Caco-2 (cell line): ENCODE measurements at regions of chr19 and their contacts with region 1.

Region 1: DNA sequence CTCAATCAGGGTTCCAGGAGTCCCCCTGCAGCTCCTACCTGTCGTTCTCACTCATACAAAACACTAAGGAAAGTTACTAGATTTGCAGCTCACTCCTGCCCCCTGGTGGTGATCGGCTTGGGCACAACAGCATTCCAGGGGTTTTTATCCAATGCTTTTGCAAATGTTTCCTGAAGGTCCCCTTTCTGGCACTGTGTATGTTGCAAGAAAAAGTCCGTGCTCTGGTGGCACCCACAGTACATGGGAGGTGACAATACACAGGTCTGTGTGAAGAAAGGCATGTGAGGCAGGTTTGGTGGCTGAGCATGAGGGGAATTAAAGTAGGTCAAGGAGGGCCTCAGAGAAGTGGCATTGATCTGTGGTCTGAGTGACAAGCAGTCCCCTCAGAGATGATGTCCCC is 8.6 kb upstream of the TYK2 start:
- DNase-seq: peak; percentile 82 to 87
- H3K4me3 ChIP-seq: no peak overlapping the region
- H3K4me3 Mint-ChIP-seq: no peak overlapping the region
- H3K27ac Mint-ChIP-seq: peak overlapping the region; percentile 49
- H3K4me1 ChIP-seq: no peaks in the 10 kb centered on the region
- H3K4me1 Mint-ChIP-seq: no peaks in the 10 kb centered on the region
- H3K27me3 ChIP-seq: no peaks in the 10 kb centered on the region
- H3K27me3 Mint-ChIP-seq: no peaks in the 10 kb centered on the region
- CTCF ChIP-seq: peak; percentile 87 to 90

Region 2: GRCh38 chr19:10289167-10289835 is 99.7 kb before region 1 on chr19:
- CTCF ChIA-PET with region 1: interaction called, 15 read pairs
- POLR2A ChIA-PET with region 1: interaction called, 6 read pairs
- intact Hi-C with region 1: no loop called
- DNase-seq: peak; percentile 61 to 78
- H3K4me3 ChIP-seq: peak overlapping the region; percentile 48
- H3K4me3 Mint-ChIP-seq: peak overlapping the region; percentile 87
- H3K27ac Mint-ChIP-seq: peak overlapping the region; percentile 77
- H3K4me1 ChIP-seq: peaks cover 33% of the 10 kb centered on the region
- H3K4me1 Mint-ChIP-seq: peaks cover 24% of the 10 kb centered on the region
- H3K27me3 ChIP-seq: no peaks in the 10 kb centered on the region
- H3K27me3 Mint-ChIP-seq: peaks cover 7% of the 10 kb centered on the region
- CTCF ChIP-seq: no peak

Region 3: DNA sequence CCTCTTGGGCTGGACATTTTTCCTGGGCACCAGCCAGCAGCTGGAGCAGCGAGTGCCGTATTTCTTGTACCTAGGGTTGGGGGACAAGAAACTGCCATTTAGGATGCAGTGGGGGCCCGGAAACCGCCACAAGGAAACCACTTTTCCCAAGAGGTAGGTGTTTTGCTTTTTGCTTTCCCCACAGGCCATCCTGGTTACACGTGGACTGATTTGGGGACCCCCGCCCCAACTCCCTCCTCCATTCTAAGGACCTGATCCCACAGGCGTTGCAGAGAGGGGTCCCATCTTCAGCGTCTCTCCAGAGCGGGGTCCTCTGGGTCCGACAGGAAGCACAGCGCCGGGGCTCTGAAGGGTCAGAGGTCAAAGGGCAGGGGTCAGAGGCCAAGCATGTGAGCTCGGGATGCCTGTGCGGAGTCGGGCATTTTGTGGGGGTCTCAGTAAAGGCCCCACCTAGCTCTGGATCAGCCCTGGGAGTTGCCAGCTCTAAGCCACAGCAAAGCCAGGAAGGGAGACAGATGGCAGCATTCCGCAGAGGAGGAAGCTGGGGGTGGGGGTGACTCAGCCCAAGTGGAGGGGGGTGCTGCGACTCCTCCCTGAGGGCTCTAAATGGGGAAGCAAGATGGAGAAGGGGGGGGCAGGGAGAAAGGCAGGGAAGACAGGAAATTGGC is 83.7 kb before region 1 on chr19:
- CTCF ChIA-PET with region 1: interaction called, 10 read pairs
- POLR2A ChIA-PET with region 1: no interaction called
- intact Hi-C with region 1: no loop called
- DNase-seq: no peak
- H3K4me3 ChIP-seq: no peak overlapping the region
- H3K4me3 Mint-ChIP-seq: no peak overlapping the region
- H3K27ac Mint-ChIP-seq: no peak overlapping the region
- H3K4me1 ChIP-seq: no peaks in the 10 kb centered on the region
- H3K4me1 Mint-ChIP-seq: no peaks in the 10 kb centered on the region
- H3K27me3 ChIP-seq: no peaks in the 10 kb centered on the region
- H3K27me3 Mint-ChIP-seq: no peaks in the 10 kb centered on the region
- CTCF ChIP-seq: no peak